Activated CD4-positive, alpha-beta T cell treated with anti-CD3 and anti-CD28 coated beads for 36 hours (primary cell): ENCODE measurements at regions of chr4 and their contacts with region 1.

Region 1: DNA sequence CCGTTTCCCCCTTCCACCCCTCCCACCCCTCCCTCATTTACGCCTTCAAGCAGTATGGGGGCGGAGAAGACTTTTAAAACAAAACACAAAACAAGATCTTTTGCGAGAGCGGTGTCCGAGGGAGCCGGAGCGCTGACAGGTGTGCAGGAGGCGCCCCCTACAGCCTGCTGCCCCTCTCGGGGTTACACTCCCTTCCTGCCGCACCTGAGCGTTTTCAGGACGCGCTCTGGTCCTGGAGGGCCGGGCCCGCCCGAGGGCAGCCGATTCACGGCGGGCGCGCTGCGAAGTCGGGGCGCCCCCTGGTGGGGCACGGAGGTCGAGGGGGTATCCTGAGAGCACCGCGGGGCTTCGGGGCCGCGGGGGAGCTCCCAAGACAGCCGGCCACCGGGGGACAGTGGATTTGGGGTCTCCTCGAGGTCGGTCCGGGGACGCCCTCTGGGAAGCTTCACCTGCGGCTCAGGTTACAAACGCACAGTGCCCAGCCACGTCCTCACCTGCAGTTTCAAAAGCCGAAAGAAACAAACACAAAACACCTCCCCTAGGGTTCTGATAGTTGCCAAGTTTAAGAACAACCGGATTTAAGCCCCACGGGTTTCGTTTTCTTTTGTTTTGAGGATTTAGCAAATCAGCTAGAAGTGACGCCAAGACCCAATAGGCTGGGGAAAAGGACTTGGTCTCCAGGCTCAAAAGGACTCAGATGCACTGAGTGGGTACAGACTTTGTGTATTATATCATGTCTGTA is 8.0 kb upstream of the NEUROG2 start:
- DNase-seq: peak; percentile 89
- ATAC-seq: peak; percentile 92
- H3K4me3 Mint-ChIP-seq: peak overlapping the region; percentile 72
- H3K27ac Mint-ChIP-seq: no peak overlapping the region
- H3K4me1 Mint-ChIP-seq: peaks cover 22% of the 10 kb centered on the region
- H3K27me3 Mint-ChIP-seq: peaks cover 47% of the 10 kb centered on the region

Region 2: GRCh38 chr4:110631584-110632505 is 1892.1 kb before region 1 on chr4:
- CTCF ChIA-PET with region 1: no interaction called
- POLR2A ChIA-PET with region 1: no interaction called
- intact Hi-C with region 1: loop called in 1 of 2 experiments (anchors 5 kb)
- DNase-seq: peak; percentile 81
- ATAC-seq: peak; percentile 95
- H3K4me3 Mint-ChIP-seq: peak overlapping the region; percentile 25
- H3K27ac Mint-ChIP-seq: no peak overlapping the region
- H3K4me1 Mint-ChIP-seq: peaks cover 13% of the 10 kb centered on the region
- H3K27me3 Mint-ChIP-seq: peaks cover 80% of the 10 kb centered on the region

Region 3: GRCh38 chr4:111905511-111905910 is 618.4 kb before region 1 on chr4:
- CTCF ChIA-PET with region 1: no interaction called
- POLR2A ChIA-PET with region 1: no interaction called
- intact Hi-C with region 1: no loop called
- DNase-seq: no peak
- ATAC-seq: no peak
- H3K4me3 Mint-ChIP-seq: no peak overlapping the region
- H3K27ac Mint-ChIP-seq: no peak overlapping the region
- H3K4me1 Mint-ChIP-seq: no peaks in the 10 kb centered on the region
- H3K27me3 Mint-ChIP-seq: no peaks in the 10 kb centered on the region

Region 4: DNA sequence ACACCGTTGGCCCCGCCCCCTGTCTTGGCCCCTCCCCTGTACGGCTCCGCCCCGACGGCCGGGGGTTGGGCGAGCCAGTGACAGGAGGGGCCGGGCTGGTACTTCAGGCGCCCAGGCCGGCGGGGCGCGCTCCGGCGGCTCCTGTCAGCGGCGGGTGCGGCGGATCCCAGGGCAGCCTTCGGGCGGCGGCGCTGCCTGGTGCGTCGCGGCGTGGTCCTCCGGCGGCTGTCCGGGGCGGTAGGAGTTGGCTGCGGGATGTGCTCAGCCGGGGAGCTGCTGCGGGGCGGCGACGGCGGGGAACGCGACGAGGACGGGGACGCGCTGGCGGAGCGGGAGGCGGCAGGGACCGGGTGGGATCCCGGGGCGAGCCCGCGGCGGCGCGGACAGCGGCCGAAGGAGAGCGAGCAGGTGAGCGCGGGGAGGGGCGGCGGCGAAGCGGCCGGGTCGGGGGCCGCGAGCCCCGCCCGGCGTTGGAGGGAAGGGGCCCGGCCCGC is 378.6 kb before region 1 on chr4 and contains the start of gene FAM241A:
- CTCF ChIA-PET with region 1: no interaction called
- POLR2A ChIA-PET with region 1: no interaction called
- intact Hi-C with region 1: loop called in 1 of 2 experiments (anchors 2 kb)
- DNase-seq: peak; percentile 94
- ATAC-seq: peak; percentile 94
- H3K4me3 Mint-ChIP-seq: peak within 1 kb of the TSS; percentile 90
- H3K27ac Mint-ChIP-seq: peak within 1 kb of the TSS; percentile 90
- H3K4me1 Mint-ChIP-seq: peaks cover 39% of the 10 kb centered on the region
- H3K27me3 Mint-ChIP-seq: no peaks in the 10 kb centered on the region
- total RNA-seq, gene FAM241A: 3.2 to 3.5 TPM

Region 5: GRCh38 chr4:112231779-112232713 is 291.9 kb before region 1 on chr4 and contains the start of gene AP1AR:
- CTCF ChIA-PET with region 1: interaction called, 3 read pairs
- POLR2A ChIA-PET with region 1: no interaction called
- intact Hi-C with region 1: loop called (anchors 1 to 5 kb)
- DNase-seq: peak; percentile 87
- ATAC-seq: peak; percentile 60
- H3K4me3 Mint-ChIP-seq: peak within 1 kb of the TSS; percentile 79
- H3K27ac Mint-ChIP-seq: peak within 1 kb of the TSS; percentile 91
- H3K4me1 Mint-ChIP-seq: peaks cover 28% of the 10 kb centered on the region
- H3K27me3 Mint-ChIP-seq: no peaks in the 10 kb centered on the region
- total RNA-seq, gene AP1AR: 15.8 to 16.5 TPM

Region 6: DNA sequence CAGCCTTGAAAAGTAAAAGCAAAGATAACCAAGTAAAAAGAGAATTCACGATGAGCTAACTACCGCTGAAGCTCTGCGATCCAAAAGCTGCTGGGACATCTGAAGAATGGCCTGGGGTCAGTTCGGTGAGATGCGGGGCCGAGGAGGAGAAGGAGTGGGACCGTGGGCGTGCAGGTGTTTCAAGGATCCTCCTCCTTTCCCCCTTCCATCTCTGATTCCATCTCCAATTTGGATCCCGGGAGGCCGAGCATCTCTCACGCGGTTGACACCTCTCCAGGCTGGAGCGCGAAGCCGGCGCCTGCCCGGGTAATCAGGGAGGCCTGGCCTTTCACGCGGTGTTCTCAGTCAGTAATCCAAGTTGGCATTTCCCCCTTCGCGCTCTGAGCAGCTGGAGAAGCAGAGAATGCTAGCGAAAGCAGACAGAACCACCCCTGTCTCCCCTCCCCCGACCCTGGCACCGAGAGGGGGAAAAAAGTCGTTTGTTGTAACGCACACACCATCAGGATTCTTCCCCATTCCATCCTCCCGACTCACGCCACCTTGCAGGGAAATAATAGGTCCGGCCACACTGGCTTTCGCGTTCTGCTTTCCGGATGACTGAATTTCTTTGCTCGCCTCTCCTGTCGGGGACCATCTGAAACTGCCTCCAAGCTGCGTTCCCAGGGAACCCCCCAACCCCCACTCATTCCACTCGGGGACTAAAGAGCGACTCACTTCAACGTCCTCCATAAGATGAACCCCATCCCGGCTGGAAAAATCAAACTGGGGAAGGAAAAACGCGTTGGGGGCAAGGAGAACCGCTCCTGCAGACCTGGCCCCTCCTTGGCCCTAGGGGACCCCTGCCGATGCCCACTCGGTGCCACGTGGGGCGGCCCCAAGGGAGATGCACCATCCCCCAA is 14.4 kb before region 1 on chr4:
- CTCF ChIA-PET with region 1: interaction called, 30 read pairs
- POLR2A ChIA-PET with region 1: interaction called, 5 read pairs
- intact Hi-C with region 1: loop called (anchors 2 kb)
- DNase-seq: peak; percentile 18
- ATAC-seq: no peak
- H3K4me3 Mint-ChIP-seq: peak overlapping the region; percentile 40
- H3K27ac Mint-ChIP-seq: no peak overlapping the region
- H3K4me1 Mint-ChIP-seq: peaks cover 31% of the 10 kb centered on the region
- H3K27me3 Mint-ChIP-seq: peaks cover 75% of the 10 kb centered on the region

Region 7: GRCh38 chr4:113012786-113013185 is 488.9 kb after region 1 on chr4:
- CTCF ChIA-PET with region 1: no interaction called
- POLR2A ChIA-PET with region 1: no interaction called
- intact Hi-C with region 1: no loop called
- DNase-seq: no peak
- ATAC-seq: no peak
- H3K4me3 Mint-ChIP-seq: no peak overlapping the region
- H3K27ac Mint-ChIP-seq: no peak overlapping the region
- H3K4me1 Mint-ChIP-seq: no peaks in the 10 kb centered on the region
- H3K27me3 Mint-ChIP-seq: peaks cover 3% of the 10 kb centered on the region